ENCODE measurements at regions of chr6 and their contacts with region 1.

Region 1: DNA sequence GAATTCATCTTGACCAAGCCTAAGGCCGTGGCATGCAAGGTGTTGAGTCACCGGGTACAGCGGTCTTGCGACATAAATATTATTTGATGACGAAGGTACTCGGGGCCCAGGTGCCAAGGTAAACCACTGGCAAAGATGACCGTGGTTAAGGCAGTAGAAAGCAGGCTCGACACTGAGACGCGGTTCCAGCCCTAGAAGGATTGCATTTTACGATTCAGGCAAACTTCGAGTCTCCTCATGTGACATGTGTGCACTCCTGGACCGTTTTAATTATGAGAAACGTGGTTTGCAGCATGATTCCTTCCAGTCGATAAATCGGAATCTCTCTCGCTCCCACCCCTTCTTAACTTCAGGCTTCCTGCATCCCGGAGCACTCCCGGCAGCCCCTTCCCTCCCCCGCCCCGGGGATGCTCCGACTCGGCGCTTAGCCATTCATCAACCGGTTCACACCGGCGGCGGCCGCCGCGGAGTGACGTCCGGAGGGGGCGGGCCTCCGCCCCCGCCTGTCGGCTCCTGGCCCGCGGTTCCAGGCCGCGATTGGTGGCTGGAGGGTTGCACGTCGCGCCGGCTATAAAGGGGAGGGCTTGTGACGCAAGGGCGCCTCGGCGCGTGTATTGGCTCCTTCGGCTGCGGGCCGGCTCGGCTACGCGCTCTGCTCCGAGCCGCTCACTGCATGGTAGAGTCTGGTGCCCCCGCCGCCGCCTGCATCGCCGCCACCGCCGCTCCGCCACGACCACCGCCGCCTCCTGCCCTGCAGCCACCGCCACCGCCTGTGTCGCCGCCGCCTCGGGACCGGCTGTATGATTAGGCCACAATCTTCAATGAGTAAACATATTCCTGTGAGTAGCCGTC is at the starts of genes LOC128125822 and PTP4A1:
- DNase-seq: peak; percentile 96
- H3K4me3 ChIP-seq: peak within 1 kb of the TSS; percentile 83 to 92 (median 88)
- H3K27ac ChIP-seq: peak within 1 kb of the TSS; percentile 99
- H3K4me1 ChIP-seq: peaks cover 18% of the 10 kb centered on the region
- H3K27me3 ChIP-seq: no peaks in the 10 kb centered on the region
- CTCF ChIP-seq: peak; percentile 13 to 36
- total RNA-seq, gene PTP4A1: 90.2 to 175 TPM

Region 2: DNA sequence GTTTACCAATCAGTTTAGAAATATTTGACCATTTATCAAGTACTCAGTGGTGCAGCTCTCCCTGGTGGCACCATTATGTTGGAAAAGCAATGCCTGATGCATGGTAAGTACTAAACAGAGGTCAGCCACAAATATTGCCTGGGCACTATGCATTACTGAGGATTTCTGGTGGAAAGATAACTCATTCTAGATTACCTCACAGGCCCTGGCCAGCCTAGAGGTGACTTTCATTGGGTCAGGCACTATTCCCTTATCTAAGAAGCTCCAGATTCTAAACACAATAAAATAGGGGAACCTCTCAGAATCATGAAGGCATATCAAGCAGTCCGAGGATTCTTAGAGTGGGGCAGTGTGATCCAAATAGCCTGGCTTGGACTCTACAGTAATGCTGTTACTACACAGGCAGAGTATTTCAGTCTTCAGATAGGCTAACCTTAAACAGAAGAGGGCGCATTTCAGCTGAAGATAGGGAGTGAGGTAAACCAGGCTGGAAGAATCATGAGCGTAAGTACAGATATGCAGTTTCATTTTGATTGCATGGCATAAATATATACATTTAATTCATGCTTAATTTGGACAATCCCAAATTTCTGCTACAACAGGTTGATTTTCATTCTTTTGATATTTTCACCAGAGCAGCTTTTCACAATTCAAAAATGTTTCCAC is 264.4 kb before region 1 on chr6:
- CTCF ChIA-PET with region 1: no interaction called
- dilution Hi-C with region 1: no loop called
- in situ Hi-C with region 1: no loop called
- intact Hi-C with region 1: loop called (anchors 5 kb)
- DNase-seq: peak; percentile 37
- H3K4me3 ChIP-seq: no peak overlapping the region
- H3K27ac ChIP-seq: no peak overlapping the region
- H3K4me1 ChIP-seq: no peaks in the 10 kb centered on the region
- H3K27me3 ChIP-seq: no peaks in the 10 kb centered on the region
- CTCF ChIP-seq: peak; percentile 50 to 59

Region 3: GRCh38 chr6:63391203-63391970 is 180.7 kb before region 1 on chr6:
- CTCF ChIA-PET with region 1: no interaction called
- dilution Hi-C with region 1: no loop called
- in situ Hi-C with region 1: no loop called
- intact Hi-C with region 1: loop called (anchors 5 kb)
- DNase-seq: no peak
- H3K4me3 ChIP-seq: no peak overlapping the region
- H3K27ac ChIP-seq: no peak overlapping the region
- H3K4me1 ChIP-seq: no peaks in the 10 kb centered on the region
- H3K27me3 ChIP-seq: no peaks in the 10 kb centered on the region
- CTCF ChIP-seq: no peak

Region 4: DNA sequence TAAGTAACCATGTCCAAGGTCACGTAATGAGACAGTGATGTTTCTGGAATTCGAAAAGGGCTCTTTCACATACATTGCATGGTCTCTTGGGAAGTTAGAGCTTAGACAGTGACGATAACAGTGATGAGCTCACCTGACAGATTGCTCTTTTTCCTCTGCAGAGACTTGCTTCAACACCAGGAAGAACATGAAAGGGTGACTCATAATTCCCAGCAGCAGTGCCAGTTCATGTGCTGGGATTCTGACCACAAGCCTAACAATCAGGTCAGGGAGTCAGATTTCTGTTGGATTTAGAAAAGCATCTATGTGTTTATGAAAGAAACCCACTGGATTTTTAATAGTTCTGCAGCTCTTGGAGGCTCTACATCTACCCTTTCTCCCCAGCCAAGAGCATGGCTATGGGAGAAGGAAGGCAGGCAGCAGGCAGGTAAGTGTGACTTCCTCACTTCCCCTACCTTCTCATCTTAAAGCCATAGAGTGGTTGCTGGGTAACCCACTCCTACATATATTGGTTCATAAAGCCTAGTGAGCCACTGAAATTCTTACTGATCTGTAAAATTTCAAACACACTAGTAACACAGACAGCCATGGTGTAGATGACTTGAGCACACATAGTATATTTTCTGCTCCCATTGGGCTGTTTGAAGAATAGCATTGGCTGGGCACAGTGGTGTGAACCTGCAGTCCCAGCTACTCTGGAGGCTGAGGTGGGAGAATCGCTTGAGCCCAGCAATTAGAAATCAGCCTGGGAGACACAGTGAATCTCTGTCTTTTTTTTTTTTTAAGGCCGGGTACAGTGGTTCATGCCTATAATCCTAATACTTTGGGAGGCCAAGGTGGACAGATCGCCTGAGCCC is 44.2 kb before region 1 on chr6:
- CTCF ChIA-PET with region 1: no interaction called
- dilution Hi-C with region 1: loop called (anchors 5 kb)
- in situ Hi-C with region 1: no loop called
- intact Hi-C with region 1: loop called (anchors 1 kb)
- DNase-seq: peak; percentile 97
- H3K4me3 ChIP-seq: no peak overlapping the region
- H3K27ac ChIP-seq: peak overlapping the region; percentile 95
- H3K4me1 ChIP-seq: peaks cover 33% of the 10 kb centered on the region
- H3K27me3 ChIP-seq: no peaks in the 10 kb centered on the region
- CTCF ChIP-seq: no peak

Region 5: DNA sequence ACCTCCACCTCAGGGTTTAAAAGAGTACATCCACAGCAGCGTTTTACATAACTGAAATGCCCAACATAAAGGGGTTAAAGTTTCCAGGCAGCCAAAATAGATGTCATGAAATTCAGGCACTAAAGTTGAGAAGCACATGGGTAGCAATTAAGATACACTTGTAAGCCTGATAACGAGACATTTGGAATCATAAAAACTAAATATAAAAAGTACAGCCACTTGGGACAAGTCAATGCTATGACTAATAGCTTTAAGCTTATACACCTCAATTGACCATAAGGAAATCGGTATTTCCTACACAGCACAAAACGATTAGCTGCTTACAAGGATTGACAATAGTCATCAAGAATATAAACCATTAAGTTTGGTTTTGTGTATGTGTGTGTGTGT is 12.0 kb after region 1 on chr6:
- CTCF ChIA-PET with region 1: no interaction called
- dilution Hi-C with region 1: no loop called
- in situ Hi-C with region 1: no loop called
- intact Hi-C with region 1: no loop called
- DNase-seq: peak; percentile 43
- H3K4me3 ChIP-seq: no peak overlapping the region
- H3K27ac ChIP-seq: no peak overlapping the region
- H3K4me1 ChIP-seq: no peaks in the 10 kb centered on the region
- H3K27me3 ChIP-seq: no peaks in the 10 kb centered on the region
- CTCF ChIP-seq: no peak

Region 6: DNA sequence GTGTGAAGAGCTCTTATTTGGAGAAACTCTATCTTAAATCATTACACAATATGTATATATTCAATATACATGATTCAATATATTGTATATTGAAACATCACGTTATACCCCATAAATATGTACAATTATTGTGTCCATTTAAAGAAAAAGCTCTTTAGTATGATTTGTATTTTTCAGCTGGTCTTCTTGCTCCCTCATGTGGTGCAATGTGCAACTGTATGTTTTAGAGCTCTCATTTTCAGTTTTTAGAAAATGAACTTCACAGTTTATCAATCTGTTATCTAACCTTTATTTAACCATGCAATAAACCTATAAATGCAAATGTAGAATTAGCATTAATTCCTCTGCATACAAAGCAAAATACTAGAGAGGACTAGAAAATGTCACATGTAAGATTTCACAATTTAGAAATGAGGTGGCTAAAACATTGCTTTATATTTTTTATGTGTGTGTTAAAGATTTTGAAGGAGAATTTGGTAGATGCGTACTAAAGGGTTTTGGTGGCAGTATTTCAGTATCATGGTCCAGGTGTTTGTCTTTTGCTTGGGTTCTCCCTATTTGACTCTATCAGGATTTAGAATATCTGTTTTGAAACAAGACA is 230.6 kb after region 1 on chr6:
- CTCF ChIA-PET with region 1: interaction called, 7 read pairs
- dilution Hi-C with region 1: no loop called
- in situ Hi-C with region 1: no loop called
- intact Hi-C with region 1: loop called (anchors 5 kb)
- DNase-seq: no peak
- H3K4me3 ChIP-seq: no peak overlapping the region
- H3K27ac ChIP-seq: no peak overlapping the region
- H3K4me1 ChIP-seq: peaks cover 39% of the 10 kb centered on the region
- H3K27me3 ChIP-seq: no peaks in the 10 kb centered on the region
- CTCF ChIP-seq: peak; percentile 71

Region 7: DNA sequence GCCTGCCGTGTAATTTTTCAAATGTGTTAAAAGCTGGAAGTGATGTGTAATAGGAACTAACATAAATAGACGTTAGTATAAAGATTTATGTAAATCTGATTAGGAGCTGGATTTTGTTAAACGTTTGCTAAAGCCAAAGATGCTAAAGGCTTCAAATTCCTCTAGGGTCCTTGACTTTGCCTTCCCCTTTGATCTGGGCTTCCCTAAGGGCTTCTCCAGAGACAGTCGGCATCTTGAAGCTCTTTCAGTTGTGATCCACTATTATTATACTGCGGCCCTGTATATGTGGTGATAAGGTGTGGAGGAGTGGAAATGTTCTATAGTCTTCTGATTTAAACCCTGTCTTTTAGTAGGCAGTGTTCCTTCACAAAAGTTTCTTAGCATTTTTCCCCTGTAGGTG is 266.1 kb after region 1 on chr6:
- CTCF ChIA-PET with region 1: no interaction called
- dilution Hi-C with region 1: no loop called
- in situ Hi-C with region 1: no loop called
- intact Hi-C with region 1: no loop called
- DNase-seq: no peak
- H3K4me3 ChIP-seq: no peak overlapping the region
- H3K27ac ChIP-seq: no peak overlapping the region
- H3K4me1 ChIP-seq: no peaks in the 10 kb centered on the region
- H3K27me3 ChIP-seq: no peaks in the 10 kb centered on the region
- CTCF ChIP-seq: no peak